ENCODE measurements at regions of chr2 and their contacts with region 1.

Region 1: DNA sequence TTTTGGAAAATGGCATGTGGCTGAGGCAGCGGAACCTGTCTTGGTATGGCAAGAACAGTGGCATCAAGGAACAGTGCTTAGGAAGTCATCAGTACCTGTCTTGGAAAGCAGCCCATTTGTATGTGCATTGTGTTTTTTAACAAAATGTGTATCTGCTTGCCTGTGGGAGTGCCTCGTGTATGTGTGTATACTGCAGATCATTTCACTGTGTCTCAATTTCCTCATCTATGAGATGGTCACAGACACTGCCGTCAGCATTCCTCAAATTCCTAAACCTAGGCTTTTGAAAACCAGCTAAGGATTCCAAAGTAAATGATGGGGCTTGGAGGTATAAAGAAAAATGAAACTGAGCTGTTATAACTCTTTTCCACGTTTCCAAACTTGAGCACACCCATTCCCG is 441.3 kb downstream of the RND3 start:
- DNase-seq: no peak
- ATAC-seq: no peak
- H3K4me3 Mint-ChIP-seq: no peak overlapping the region
- H3K27ac Mint-ChIP-seq: no peak overlapping the region
- H3K4me1 Mint-ChIP-seq: no peaks in the 10 kb centered on the region
- H3K27me3 Mint-ChIP-seq: no peaks in the 10 kb centered on the region
- CTCF ChIP-seq: no peak

Region 2: GRCh38 chr2:149527998-149528755 is 518.0 kb before region 1 on chr2:
- CTCF ChIA-PET with region 1: no interaction called
- POLR2A ChIA-PET with region 1: no interaction called
- intact Hi-C with region 1: no loop called
- DNase-seq: no peak
- ATAC-seq: no peak
- H3K4me3 Mint-ChIP-seq: no peak overlapping the region
- H3K27ac Mint-ChIP-seq: no peak overlapping the region
- H3K4me1 Mint-ChIP-seq: no peaks in the 10 kb centered on the region
- H3K27me3 Mint-ChIP-seq: peaks cover 18% of the 10 kb centered on the region
- CTCF ChIP-seq: no peak

Region 3: DNA sequence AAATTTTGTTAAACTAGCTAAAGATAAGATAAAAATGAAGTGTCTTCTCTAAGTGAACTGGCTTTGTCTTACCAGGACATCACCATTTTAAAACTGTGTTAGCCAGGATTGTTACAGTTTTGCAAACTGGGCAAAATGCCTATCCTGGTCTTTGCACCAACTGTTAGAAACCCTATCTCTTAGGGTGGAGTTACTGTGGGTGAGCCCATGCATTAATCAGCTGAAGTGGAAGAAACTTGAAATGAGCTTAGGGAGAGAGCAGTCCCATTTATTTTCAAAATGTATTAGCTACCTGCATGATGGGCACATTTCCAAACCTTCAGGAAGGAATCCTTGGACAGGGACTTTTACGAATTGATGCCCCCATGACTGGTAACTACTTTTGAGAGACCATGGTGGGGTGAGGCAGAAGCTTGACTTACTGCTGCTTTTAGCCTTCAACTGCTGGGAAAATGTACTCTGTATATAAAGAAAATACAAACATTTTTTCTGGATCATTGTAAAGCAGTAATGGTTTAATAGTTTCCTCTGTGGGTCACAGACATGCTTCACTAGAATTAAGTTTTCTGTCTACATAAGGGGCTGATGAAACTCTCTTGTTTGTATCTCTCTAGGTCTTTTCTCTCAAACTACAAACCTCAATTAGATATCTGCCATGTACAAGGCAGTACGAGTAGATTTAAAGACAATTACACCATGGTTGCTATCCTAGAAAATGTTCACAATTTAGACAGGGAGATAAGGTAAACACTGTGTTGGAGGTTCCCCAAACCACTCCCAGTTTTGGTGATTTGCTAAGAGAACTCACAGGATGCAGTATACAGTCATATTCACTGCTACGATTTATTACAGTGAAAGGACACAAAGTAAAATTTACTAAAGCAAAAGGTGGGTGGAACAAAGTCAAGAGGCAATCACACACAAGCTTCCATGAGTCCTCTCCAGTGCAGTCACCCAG is 137.2 kb before region 1 on chr2:
- CTCF ChIA-PET with region 1: no interaction called
- POLR2A ChIA-PET with region 1: no interaction called
- intact Hi-C with region 1: loop called (anchors 5 kb)
- DNase-seq: no peak
- ATAC-seq: no peak
- H3K4me3 Mint-ChIP-seq: no peak overlapping the region
- H3K27ac Mint-ChIP-seq: no peak overlapping the region
- H3K4me1 Mint-ChIP-seq: no peaks in the 10 kb centered on the region
- H3K27me3 Mint-ChIP-seq: no peaks in the 10 kb centered on the region
- CTCF ChIP-seq: no peak

Region 4: DNA sequence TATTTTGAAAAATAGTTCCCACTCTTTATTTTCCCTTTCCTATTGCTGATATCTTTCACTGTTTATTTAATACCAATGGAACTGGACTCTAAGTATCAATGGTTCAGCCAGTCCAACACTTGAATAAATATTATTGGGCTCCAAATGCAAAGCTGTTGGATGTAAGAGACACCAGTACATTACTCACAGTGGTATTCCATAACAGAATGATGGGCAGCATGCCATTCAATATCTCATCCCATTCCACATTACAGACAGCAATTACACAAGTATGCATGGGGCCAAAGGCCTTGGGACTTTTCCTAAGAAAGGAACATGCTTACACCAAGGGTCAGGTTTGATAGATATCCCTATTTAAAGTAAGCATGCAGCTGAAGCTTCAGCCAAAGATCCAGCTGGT is 209.3 kb after region 1 on chr2:
- CTCF ChIA-PET with region 1: no interaction called
- POLR2A ChIA-PET with region 1: no interaction called
- intact Hi-C with region 1: no loop called
- DNase-seq: no peak
- ATAC-seq: no peak
- H3K4me3 Mint-ChIP-seq: no peak overlapping the region
- H3K27ac Mint-ChIP-seq: no peak overlapping the region
- H3K4me1 Mint-ChIP-seq: no peaks in the 10 kb centered on the region
- H3K27me3 Mint-ChIP-seq: no peaks in the 10 kb centered on the region
- CTCF ChIP-seq: no peak

Measured in activated CD8-positive, alpha-beta T cell treated with anti-CD3 and anti-CD28 coated beads for 36 hours (primary cell).